RWPE1 (cell line): ENCODE measurements at regions of chr6 and their contacts with region 1.

Region 1: DNA sequence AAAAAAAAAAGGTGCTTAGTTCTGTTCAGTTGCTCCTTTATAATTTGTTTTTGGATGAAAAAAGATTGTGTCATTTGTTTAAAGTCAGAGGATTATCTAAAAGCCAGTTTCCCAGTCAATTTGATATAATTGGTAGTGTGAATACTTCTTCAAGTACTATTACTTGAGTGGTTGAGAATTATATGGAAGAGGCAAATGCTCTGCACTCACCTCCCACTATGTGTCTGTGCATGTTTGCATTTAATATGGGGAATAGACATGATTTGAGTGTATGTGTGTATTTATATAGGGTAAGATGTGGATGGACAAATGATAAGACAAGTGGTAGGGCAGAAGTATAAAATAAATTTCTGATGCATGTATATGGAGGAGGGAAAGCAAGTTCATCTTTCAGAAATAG is 15.8 kb downstream of the GJA1 start:
- DNase-seq: no peak
- H3K27ac ChIP-seq: no peak overlapping the region
- CTCF ChIP-seq: no peak

Region 2: GRCh38 chr6:121135425-121135824 is 315.8 kb before region 1 on chr6:
- CTCF ChIA-PET with region 1: no interaction called
- POLR2A ChIA-PET with region 1: interaction called, 10 read pairs
- DNase-seq: no peak
- H3K27ac ChIP-seq: no peak overlapping the region
- CTCF ChIP-seq: no peak